CD8-positive, alpha-beta T cell (primary cell): ENCODE measurements at regions of chr3 and their contacts with region 1.

Region 1: DNA sequence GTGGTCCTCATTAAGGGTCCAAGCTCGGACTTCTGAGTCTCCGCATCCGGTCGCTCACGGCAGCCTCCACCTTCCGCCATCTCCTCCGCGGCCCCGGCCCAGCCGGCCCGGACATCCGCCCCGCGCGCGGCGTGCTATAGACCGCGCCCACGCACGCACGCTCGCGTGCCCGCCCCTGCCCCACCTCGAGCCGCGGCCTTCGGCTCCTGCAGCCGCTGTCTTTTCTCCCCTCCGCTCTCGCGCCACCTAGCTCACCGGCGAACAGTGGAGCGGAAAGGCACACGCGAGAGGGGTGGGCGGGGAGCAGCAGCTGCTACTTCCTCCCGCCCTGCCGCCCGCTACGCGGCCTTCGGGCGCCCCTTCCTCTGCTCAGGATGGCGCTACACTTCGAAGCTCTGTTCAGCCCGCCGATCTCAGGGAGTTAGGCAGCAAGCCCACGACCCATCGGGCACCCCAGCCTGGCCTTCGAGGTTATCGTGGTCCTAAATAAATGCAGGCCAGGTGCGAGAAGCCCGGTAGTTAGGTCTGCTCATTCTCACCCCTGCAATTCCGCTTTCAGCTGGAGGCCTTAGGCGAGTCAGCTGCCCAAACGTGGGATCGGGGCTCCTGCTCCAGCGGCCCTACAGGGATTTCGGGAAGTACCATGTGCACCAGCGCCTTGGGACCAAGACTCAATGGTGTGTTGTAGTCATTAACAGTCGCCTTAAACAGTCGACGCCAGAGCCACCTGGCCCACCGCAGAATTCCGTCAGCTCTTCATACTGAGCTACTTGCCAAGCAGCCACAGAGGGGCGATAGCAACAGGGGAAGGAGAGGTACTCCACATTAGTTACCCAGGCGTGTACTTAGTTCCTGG is at the start of gene USP4:
- DNase-seq: peak; percentile 79 to 97 (median 90)
- ATAC-seq: peak; percentile 85
- H3K4me3 ChIP-seq: peak within 1 kb of the TSS; percentile 78 to 89
- H3K4me3 Mint-ChIP-seq: peak within 1 kb of the TSS; percentile 93
- H3K27ac ChIP-seq: peak within 1 kb of the TSS; percentile 98
- H3K27ac Mint-ChIP-seq: peak within 1 kb of the TSS; percentile 96
- H3K4me1 ChIP-seq: peaks cover 40% of the 10 kb centered on the region
- H3K4me1 Mint-ChIP-seq: peaks cover 48% of the 10 kb centered on the region
- H3K27me3 ChIP-seq: no peaks in the 10 kb centered on the region
- H3K27me3 Mint-ChIP-seq: no peaks in the 10 kb centered on the region
- CTCF ChIP-seq: peak; percentile 36
- total RNA-seq, gene USP4: 78.0 to 92.4 TPM

Region 2: GRCh38 chr3:48952510-48953118 is 387.6 kb before region 1 on chr3:
- CTCF ChIA-PET with region 1: no interaction called
- POLR2A ChIA-PET with region 1: no interaction called
- intact Hi-C with region 1: no loop called
- DNase-seq: peak; percentile 22 to 75 (median 61)
- ATAC-seq: peak; percentile 84
- H3K4me3 ChIP-seq: no peak overlapping the region
- H3K4me3 Mint-ChIP-seq: no peak overlapping the region
- H3K27ac ChIP-seq: peak overlapping the region in 1 of 2 experiments; percentile 28
- H3K27ac Mint-ChIP-seq: peak overlapping the region; percentile 7
- H3K4me1 ChIP-seq: no peaks in the 10 kb centered on the region
- H3K4me1 Mint-ChIP-seq: peaks cover 22% of the 10 kb centered on the region
- H3K27me3 ChIP-seq: no peaks in the 10 kb centered on the region
- H3K27me3 Mint-ChIP-seq: no peaks in the 10 kb centered on the region
- CTCF ChIP-seq: peak; percentile 50

Region 3: GRCh38 chr3:49171119-49171774 is 168.9 kb before region 1 on chr3 and contains the start of gene KLHDC8B:
- CTCF ChIA-PET with region 1: interaction called, 4 read pairs
- POLR2A ChIA-PET with region 1: interaction called, 6 read pairs
- intact Hi-C with region 1: loop called in 1 of 2 experiments (anchors 5 kb)
- DNase-seq: peak; percentile 68 to 90 (median 84)
- ATAC-seq: peak; percentile 85
- H3K4me3 ChIP-seq: peak within 1 kb of the TSS; percentile 72 to 88
- H3K4me3 Mint-ChIP-seq: peak within 1 kb of the TSS; percentile 89
- H3K27ac ChIP-seq: peak within 1 kb of the TSS; percentile 3 to 40
- H3K27ac Mint-ChIP-seq: peak within 1 kb of the TSS; percentile 79
- H3K4me1 ChIP-seq: peaks cover 24% of the 10 kb centered on the region
- H3K4me1 Mint-ChIP-seq: peaks cover 25% of the 10 kb centered on the region
- H3K27me3 ChIP-seq: no peaks in the 10 kb centered on the region
- H3K27me3 Mint-ChIP-seq: no peaks in the 10 kb centered on the region
- CTCF ChIP-seq: peak; percentile 97
- total RNA-seq, gene KLHDC8B: 1.1 to 1.6 TPM

Region 4: GRCh38 chr3:49351521-49352011 is 11.4 kb after region 1 on chr3:
- CTCF ChIA-PET with region 1: interaction called, 12 read pairs
- POLR2A ChIA-PET with region 1: interaction called, 55 read pairs
- intact Hi-C with region 1: no loop called
- DNase-seq: no peak
- ATAC-seq: no peak
- H3K4me3 ChIP-seq: no peak overlapping the region
- H3K4me3 Mint-ChIP-seq: no peak overlapping the region
- H3K27ac ChIP-seq: no peak overlapping the region
- H3K27ac Mint-ChIP-seq: peak overlapping the region; percentile 34
- H3K4me1 ChIP-seq: peaks cover 6% of the 10 kb centered on the region
- H3K4me1 Mint-ChIP-seq: peaks cover 20% of the 10 kb centered on the region
- H3K27me3 ChIP-seq: no peaks in the 10 kb centered on the region
- H3K27me3 Mint-ChIP-seq: no peaks in the 10 kb centered on the region
- CTCF ChIP-seq: no peak

Region 5: DNA sequence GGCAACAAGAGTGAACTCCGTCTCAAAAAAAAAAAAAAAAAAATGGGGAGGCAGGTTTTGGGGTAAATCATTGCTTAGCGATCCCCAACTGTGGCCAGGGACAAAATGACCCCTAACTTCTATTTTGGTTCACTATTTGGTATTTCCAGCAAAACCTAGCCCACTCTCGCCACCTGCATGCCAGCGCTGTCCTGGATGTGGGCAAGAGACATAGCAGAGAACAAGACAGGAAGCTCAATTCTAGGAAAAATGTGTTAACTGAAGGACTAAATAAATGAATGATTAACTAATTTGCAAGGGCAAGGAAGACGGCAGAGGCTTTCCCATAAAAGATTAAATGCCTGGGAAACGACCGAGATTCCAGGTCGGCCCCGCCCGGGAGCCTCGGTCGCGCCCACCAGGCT is 88.5 kb after region 1 on chr3:
- CTCF ChIA-PET with region 1: interaction called, 7 read pairs
- POLR2A ChIA-PET with region 1: interaction called, 29 read pairs
- intact Hi-C with region 1: loop called (anchors 1 kb)
- DNase-seq: no peak
- ATAC-seq: peak; percentile 2
- H3K4me3 ChIP-seq: peak overlapping the region; percentile 63 to 85
- H3K4me3 Mint-ChIP-seq: peak overlapping the region; percentile 89
- H3K27ac ChIP-seq: peak overlapping the region; percentile 70 to 86
- H3K27ac Mint-ChIP-seq: peak overlapping the region; percentile 89
- H3K4me1 ChIP-seq: peaks cover 10% of the 10 kb centered on the region
- H3K4me1 Mint-ChIP-seq: peaks cover 14% of the 10 kb centered on the region
- H3K27me3 ChIP-seq: no peaks in the 10 kb centered on the region
- H3K27me3 Mint-ChIP-seq: no peaks in the 10 kb centered on the region
- CTCF ChIP-seq: no peak

Region 6: GRCh38 chr3:49454458-49454857 is 114.3 kb after region 1 on chr3:
- CTCF ChIA-PET with region 1: interaction called, 40 read pairs
- POLR2A ChIA-PET with region 1: interaction called, 20 read pairs
- intact Hi-C with region 1: loop called (anchors 1 kb)
- DNase-seq: no peak
- ATAC-seq: no peak
- H3K4me3 ChIP-seq: no peak overlapping the region
- H3K4me3 Mint-ChIP-seq: no peak overlapping the region
- H3K27ac ChIP-seq: no peak overlapping the region
- H3K27ac Mint-ChIP-seq: no peak overlapping the region
- H3K4me1 ChIP-seq: no peaks in the 10 kb centered on the region
- H3K4me1 Mint-ChIP-seq: no peaks in the 10 kb centered on the region
- H3K27me3 ChIP-seq: no peaks in the 10 kb centered on the region
- H3K27me3 Mint-ChIP-seq: no peaks in the 10 kb centered on the region
- CTCF ChIP-seq: no peak